Astrocyte of the cerebellum (primary cell): ENCODE measurements at regions of chr17 and their contacts with region 1.

Region 1: GRCh38 chr17:2140683-2141082 is 85.8 kb downstream of the HIC1 start:
- DNase-seq: no peak
- H3K4me3 ChIP-seq: no peak overlapping the region
- CTCF ChIP-seq: no peak

Region 2: DNA sequence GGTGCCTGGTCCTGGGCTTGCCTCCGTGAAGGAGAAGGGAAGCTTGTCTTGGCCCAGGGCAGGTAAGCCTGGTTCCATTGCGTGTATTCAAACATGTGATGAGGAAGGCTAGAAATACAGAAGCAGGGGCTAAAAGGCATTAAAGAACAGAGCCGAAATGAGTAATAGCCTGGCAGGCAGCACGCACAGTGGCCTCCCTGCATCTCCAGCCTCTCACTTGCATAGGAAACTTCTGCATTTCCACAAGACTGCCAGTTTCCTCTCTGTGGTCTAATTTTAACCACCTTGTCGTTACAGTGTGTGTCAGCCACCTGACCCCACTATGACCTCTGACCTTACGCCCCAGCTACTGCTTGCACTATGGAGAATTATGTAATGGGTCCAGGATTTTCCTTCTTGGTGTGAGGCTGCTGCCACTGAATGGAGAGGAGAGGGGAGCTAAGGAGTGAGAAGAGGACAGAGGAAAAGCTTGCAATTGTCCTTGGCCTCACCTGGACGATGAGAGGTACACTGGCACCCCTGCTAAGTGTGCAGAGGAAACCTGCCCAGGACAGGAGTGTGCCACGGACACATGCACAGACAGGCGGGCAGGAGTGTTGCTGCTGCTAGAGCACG is 53.0 kb before region 1 on chr17:
- in situ Hi-C with region 1: loop called (anchors 5 kb)
- DNase-seq: no peak
- H3K4me3 ChIP-seq: no peak overlapping the region
- CTCF ChIP-seq: no peak

Region 3: GRCh38 chr17:2101448-2102257 is 39.0 kb before region 1 on chr17:
- in situ Hi-C with region 1: no loop called
- DNase-seq: no peak
- H3K4me3 ChIP-seq: no peak overlapping the region
- CTCF ChIP-seq: no peak